Psoas muscle (tissue), 8 donors: ENCODE measurements at regions of chr2 and their contacts with region 1.

Region 1: DNA sequence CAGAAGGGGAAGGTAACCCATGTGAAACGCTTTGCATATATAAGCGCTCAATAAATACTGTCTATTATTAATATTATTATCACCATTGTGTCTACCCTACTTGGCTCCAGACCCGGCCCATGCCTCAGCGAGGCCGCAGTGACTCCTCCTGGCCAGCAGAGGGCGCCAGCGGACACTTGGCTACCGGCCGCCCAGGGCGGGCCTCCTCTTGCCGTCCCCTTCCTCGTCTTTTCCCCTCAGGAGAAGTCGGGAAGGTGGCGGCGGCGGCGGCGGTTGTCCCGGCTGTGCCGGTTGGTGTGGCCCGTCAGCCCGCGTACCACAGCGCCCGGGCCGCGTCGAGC is at the start of gene AGFG1:
- DNase-seq: peak; percentile 79 to 90
- ATAC-seq: peak; percentile 92 to 95 (median 93)
- H3K4me3 ChIP-seq: peak within 1 kb of the TSS; percentile 91
- H3K27ac ChIP-seq: peak within 1 kb of the TSS; percentile 80
- H3K4me1 ChIP-seq: peaks cover 13% of the 10 kb centered on the region
- H3K27me3 ChIP-seq: no peaks in the 10 kb centered on the region
- CTCF ChIP-seq: peak; percentile 100
- total RNA-seq, gene AGFG1: 54.9 to 68.2 (median 58.9) TPM

Region 2: GRCh38 chr2:227545990-227546389 is 74.1 kb after region 1 on chr2:
- intact Hi-C with region 1: loop called in 1 of 2 experiments (anchors 10 kb)
- DNase-seq: no peak
- ATAC-seq: no peak
- H3K4me3 ChIP-seq: no peak overlapping the region
- H3K27ac ChIP-seq: no peak overlapping the region
- H3K4me1 ChIP-seq: no peaks in the 10 kb centered on the region
- H3K27me3 ChIP-seq: no peaks in the 10 kb centered on the region
- CTCF ChIP-seq: no peak